Right lobe of liver (tissue), 6 donors: ENCODE measurements at regions of chr9 and their contacts with region 1.

Region 1: GRCh38 chr9:806285-807156 is 35.0 kb upstream of the DMRT1 start:
- DNase-seq: no peak
- ATAC-seq: peak; percentile 65 to 76 (median 74)
- H3K4me3 ChIP-seq: no peak overlapping the region
- H3K27ac ChIP-seq: no peak overlapping the region
- H3K4me1 ChIP-seq: no peaks in the 10 kb centered on the region
- H3K27me3 ChIP-seq: no peaks in the 10 kb centered on the region
- CTCF ChIP-seq: peak; percentile 59 to 77 (median 75)
- POLR2A ChIP-seq: no peak

Region 2: GRCh38 chr9:581673-582497 is 224.6 kb before region 1 on chr9:
- intact Hi-C with region 1: loop called in 1 of 2 experiments (anchors 10 kb)
- DNase-seq: peak in 2 of 3 donors; percentile 52 to 59
- ATAC-seq: peak; percentile 75 to 88 (median 85)
- H3K4me3 ChIP-seq: no peak overlapping the region
- H3K27ac ChIP-seq: no peak overlapping the region
- H3K4me1 ChIP-seq: no peaks in the 10 kb centered on the region
- H3K27me3 ChIP-seq: no peaks in the 10 kb centered on the region
- CTCF ChIP-seq: peak; percentile 48 to 57 (median 50)
- POLR2A ChIP-seq: no peak